OCI-LY7 (cell line): ENCODE measurements at regions of chr1 and their contacts with region 1.

Region 1: GRCh38 chr1:26695356-26696118 is at the start of gene ARID1A:
- DNase-seq: peak; percentile 98
- H3K4me3 ChIP-seq: peak within 1 kb of the TSS; percentile 87
- H3K27ac ChIP-seq: peak within 1 kb of the TSS; percentile 95
- H3K4me1 ChIP-seq: peaks cover 54% of the 10 kb centered on the region
- CTCF ChIP-seq: no peak
- total RNA-seq, gene ARID1A: 51.8 and 55.2 TPM in 2 replicates

Region 2: DNA sequence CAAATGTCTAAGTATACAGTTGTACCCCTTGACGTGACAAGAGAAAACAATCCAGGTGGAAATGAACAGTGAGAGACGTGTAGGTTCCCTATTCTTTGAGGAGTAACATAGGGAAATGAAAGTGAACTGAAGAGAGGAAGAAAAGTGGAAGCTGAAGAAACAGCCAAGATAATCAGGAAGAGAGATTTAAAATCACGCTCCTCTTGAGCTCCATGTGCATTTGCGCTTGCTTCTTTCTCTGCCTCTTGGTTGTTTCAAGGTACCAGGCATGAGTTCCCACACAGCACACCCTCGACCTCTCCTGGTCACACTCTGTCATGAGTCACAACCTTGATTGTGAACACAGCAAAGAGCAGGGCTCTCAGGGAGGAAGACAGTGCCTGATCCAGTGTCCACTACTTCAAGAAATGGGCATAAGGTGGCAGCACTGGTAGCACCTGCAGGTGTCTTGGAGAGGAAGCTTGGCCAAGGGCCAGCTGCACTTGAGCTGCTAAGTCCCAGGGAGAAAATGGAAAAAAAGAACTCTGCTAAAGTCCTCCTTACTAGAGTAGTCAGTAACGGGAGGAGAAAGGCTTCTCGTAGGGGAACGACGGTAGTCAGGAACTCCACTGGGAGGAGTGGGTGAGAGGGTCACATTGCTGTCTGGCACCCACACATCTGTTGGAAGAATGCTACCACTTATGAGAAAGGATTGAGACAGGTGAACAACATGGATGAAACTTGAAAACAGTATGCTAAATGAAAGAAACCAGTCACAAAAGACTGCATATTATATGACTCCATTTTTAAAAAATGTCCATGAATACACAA is 18.0 kb before region 1 on chr1:
- CTCF ChIA-PET with region 1: interaction called, 7 read pairs
- POLR2A ChIA-PET with region 1: interaction called, 36 read pairs
- intact Hi-C with region 1: no loop called
- DNase-seq: peak; percentile 82
- H3K4me3 ChIP-seq: peak overlapping the region; percentile 3
- H3K27ac ChIP-seq: no peak overlapping the region
- H3K4me1 ChIP-seq: peaks cover 15% of the 10 kb centered on the region
- CTCF ChIP-seq: peak; percentile 84

Region 3: DNA sequence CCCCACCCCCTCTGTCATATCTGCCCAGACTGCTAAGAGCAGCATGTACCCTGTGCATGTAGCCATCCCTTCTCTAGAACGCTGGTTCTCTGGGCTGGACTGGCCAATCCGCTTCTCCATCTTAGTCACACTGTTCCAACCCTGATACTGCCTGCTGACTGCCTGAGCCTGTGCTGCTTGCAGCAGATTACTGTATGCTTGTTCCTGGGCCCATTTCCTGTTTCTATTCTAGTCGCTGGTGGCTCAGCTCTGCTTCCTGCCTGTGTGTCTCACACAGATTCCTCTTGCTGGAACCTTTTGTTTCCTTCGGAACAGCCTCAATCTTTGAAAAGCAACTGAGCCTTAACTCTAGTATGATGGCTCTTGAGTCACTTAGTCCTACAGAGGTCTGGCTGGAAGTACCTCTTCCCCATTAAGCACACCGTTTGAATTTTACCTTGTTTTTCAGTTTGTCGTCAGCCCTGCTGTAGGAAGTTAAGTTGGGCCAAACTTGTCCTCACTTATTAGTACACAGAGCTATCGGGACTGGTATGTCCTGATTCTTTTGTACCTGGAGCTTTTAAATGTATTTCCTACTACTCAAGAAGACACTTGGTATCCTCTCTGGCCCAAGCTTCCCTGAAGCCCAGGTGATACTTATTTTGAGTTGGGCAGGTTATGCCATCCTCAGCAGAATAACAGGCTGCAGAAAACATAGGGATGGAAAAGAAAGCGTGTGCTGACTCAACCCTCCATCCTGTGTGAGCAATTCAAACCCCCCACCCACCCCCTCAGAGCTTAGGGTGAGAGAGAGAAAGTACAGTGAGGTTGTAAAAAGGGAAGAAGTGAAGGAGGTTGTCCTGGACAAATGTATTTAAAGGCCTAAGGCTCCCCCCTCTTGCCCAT is 48.8 kb after region 1 on chr1:
- CTCF ChIA-PET with region 1: no interaction called
- POLR2A ChIA-PET with region 1: interaction called, 24 read pairs
- intact Hi-C with region 1: loop called (anchors 2 kb)
- DNase-seq: peak; percentile 97
- H3K4me3 ChIP-seq: peak overlapping the region; percentile 61
- H3K27ac ChIP-seq: peak overlapping the region; percentile 96
- H3K4me1 ChIP-seq: peaks cover 60% of the 10 kb centered on the region
- CTCF ChIP-seq: no peak

Region 4: DNA sequence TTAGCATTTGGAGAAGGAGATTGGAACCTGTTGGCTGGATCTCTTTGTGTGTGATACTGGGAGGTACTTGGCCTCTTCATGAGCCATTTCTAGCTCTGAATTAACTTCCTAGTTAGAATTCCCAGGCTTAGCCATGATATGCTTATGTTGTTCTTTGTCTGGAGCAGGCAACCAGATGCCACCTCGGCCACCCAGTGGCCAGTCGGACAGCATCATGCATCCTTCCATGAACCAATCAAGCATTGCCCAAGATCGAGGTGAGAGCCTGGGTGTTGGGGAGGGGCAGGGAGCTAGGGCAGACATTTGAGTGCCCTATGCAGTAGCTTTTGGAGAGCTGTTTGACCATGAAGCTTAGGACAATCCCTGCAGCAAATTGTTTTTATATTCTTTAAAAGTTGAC is 65.7 kb after region 1 on chr1:
- CTCF ChIA-PET with region 1: no interaction called
- POLR2A ChIA-PET with region 1: no interaction called
- intact Hi-C with region 1: no loop called
- DNase-seq: no peak
- H3K4me3 ChIP-seq: no peak overlapping the region
- H3K27ac ChIP-seq: no peak overlapping the region
- H3K4me1 ChIP-seq: no peaks in the 10 kb centered on the region
- CTCF ChIP-seq: 0 out of 2 replicates have a peak, but pooled peaks have one; percentile 34

Region 5: GRCh38 chr1:26864610-26865527 is 169.3 kb after region 1 on chr1:
- CTCF ChIA-PET with region 1: no interaction called
- POLR2A ChIA-PET with region 1: interaction called, 6 read pairs
- intact Hi-C with region 1: loop called (anchors 2 kb)
- DNase-seq: peak; percentile 98
- H3K4me3 ChIP-seq: peak overlapping the region; percentile 82
- H3K27ac ChIP-seq: peak overlapping the region; percentile 97
- H3K4me1 ChIP-seq: peaks cover 40% of the 10 kb centered on the region
- CTCF ChIP-seq: no peak